GM12878 (cell line): ENCODE measurements at regions of chr2 and their contacts with region 1.

Region 1: GRCh38 chr2:73385595-73386341 is at the start of gene ALMS1:
- DNase-seq: peak; percentile 63
- ATAC-seq: peak; percentile 92
- H3K4me3 ChIP-seq: peak within 1 kb of the TSS; percentile 91
- H3K27ac ChIP-seq: peak within 1 kb of the TSS; percentile 68
- H3K4me1 ChIP-seq: no peaks in the 10 kb centered on the region
- H3K27me3 ChIP-seq: peaks cover 0 to under 1% of the 10 kb centered on the region in 2 experiments; a peak in 1 of 4 replicates
- CTCF ChIP-seq: 0 out of 6 replicates have a peak, but pooled peaks of 1 of the 3 experiments have one; percentile 3
- EP300 ChIP-seq: no peak
- POLR2A ChIP-seq: peak; percentile 76
- RAD21 ChIP-seq: no peak
- polyA plus RNA-seq, gene ALMS1: 1.1 to 2.2 TPM

Region 2: GRCh38 chr2:73233154-73233931 is 152.4 kb before region 1 on chr2 and contains the start of gene PRADC1:
- CTCF ChIA-PET with region 1: no interaction called
- POLR2A ChIA-PET with region 1: no interaction called
- RAD21 ChIA-PET with region 1: no interaction called
- SMC1A ChIA-PET with region 1: no interaction called
- in situ Hi-C with region 1: no loop called
- intact Hi-C with region 1: loop called (anchors 5 kb)
- DNase-seq: peak; percentile 97
- ATAC-seq: peak; percentile 93
- H3K4me3 ChIP-seq: peak within 1 kb of the TSS; percentile 78
- H3K27ac ChIP-seq: peak within 1 kb of the TSS; percentile 91
- H3K4me1 ChIP-seq: peaks cover 4% of the 10 kb centered on the region
- H3K27me3 ChIP-seq: no peaks in the 10 kb centered on the region
- CTCF ChIP-seq: no peak
- EP300 ChIP-seq: no peak
- POLR2A ChIP-seq: peak; percentile 77
- RAD21 ChIP-seq: no peak
- polyA plus RNA-seq, gene PRADC1: 3.7 to 8.1 TPM

Region 3: DNA sequence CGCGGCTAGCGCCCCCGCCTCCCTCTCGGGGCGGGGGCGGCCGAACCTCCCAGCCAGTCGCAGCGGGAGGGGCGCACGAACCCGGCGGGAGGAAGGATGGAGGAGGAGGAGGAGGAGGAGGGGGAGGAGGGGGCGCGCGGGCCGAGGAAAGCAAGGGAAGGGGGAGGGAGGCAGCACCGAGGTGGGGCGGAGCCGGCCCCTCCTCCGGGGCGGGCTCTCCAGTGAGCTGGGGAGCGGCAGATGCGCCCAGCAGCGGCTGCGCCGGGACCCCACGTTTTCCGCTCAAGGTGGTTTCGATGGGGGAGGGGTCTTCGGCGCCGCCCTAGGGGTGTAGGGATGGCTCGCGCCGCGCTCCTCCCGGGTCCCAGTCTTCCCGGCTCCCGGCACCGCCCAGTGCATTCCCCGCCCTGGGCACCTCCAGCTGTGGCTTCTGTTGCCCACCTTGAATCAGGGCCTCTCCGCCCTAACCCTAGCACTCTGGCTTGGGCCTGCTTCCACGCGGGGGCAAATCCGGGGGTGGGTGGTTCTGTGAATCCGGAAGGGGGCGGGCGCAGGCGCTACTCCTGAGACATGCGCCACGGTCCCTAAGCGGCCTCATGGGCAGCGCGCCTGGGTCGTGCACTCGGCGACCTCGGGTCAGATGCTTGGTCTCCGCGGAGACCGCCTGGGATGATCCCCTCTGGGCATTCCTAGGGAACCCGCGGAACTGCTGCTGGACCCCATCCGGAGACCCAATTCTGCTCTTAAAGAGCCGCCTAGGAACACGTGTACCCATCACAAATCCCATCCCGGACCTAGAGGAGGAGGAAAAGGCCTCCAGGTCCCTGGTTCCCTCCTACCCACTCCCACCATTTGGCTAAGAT is 101.2 kb before region 1 on chr2 and contains the start of gene FBXO41:
- CTCF ChIA-PET with region 1: interaction called, 4 read pairs
- POLR2A ChIA-PET with region 1: no interaction called
- RAD21 ChIA-PET with region 1: no interaction called
- SMC1A ChIA-PET with region 1: no interaction called
- in situ Hi-C with region 1: no loop called
- intact Hi-C with region 1: loop called (anchors 2 kb)
- DNase-seq: peak; percentile 47
- ATAC-seq: peak; percentile 88
- H3K4me3 ChIP-seq: peak within 1 kb of the TSS; percentile 99
- H3K27ac ChIP-seq: peak within 1 kb of the TSS; percentile 80
- H3K4me1 ChIP-seq: peaks cover 11% of the 10 kb centered on the region
- H3K27me3 ChIP-seq: no peaks in the 10 kb centered on the region
- CTCF ChIP-seq: peak in 1 of 3 experiments; percentile 12; a peak in 1 of 6 replicates
- EP300 ChIP-seq: no peak
- POLR2A ChIP-seq: peak; percentile 79
- RAD21 ChIP-seq: no peak
- polyA plus RNA-seq, gene FBXO41: 1.9 to 2.0 TPM

Region 4: DNA sequence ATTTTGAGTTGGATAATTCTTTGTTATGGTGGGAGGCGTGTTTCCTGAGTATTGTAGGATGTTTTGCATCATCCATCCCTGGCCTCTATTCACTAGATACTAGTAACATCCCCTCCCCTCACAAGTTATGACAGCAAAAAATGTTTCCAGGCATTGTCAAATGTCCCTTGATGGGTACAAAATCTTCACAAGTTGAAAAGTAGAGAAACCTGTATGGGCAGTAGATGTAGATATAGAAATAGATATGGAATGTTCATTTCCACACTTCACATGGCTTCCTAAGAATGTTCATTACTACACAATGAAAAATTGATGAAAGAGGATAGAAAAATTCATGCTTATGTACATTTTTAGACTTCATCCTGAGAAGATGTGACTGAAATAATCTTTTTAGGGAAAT is 45.3 kb after region 1 on chr2:
- CTCF ChIA-PET with region 1: no interaction called
- POLR2A ChIA-PET with region 1: no interaction called
- RAD21 ChIA-PET with region 1: no interaction called
- SMC1A ChIA-PET with region 1: no interaction called
- in situ Hi-C with region 1: no loop called
- intact Hi-C with region 1: no loop called
- DNase-seq: no peak
- ATAC-seq: no peak
- H3K4me3 ChIP-seq: no peak overlapping the region
- H3K27ac ChIP-seq: no peak overlapping the region
- H3K4me1 ChIP-seq: no peaks in the 10 kb centered on the region
- H3K27me3 ChIP-seq: no peaks in the 10 kb centered on the region
- CTCF ChIP-seq: no peak
- EP300 ChIP-seq: no peak
- POLR2A ChIP-seq: no peak
- RAD21 ChIP-seq: no peak

Region 5: GRCh38 chr2:73601780-73602179 is 216.0 kb after region 1 on chr2:
- CTCF ChIA-PET with region 1: interaction called, 4 read pairs
- POLR2A ChIA-PET with region 1: no interaction called
- RAD21 ChIA-PET with region 1: no interaction called
- SMC1A ChIA-PET with region 1: no interaction called
- in situ Hi-C with region 1: no loop called
- intact Hi-C with region 1: loop called (anchors 10 kb)
- DNase-seq: no peak
- ATAC-seq: no peak
- H3K4me3 ChIP-seq: no peak overlapping the region
- H3K27ac ChIP-seq: no peak overlapping the region
- H3K4me1 ChIP-seq: peaks cover 5% of the 10 kb centered on the region
- H3K27me3 ChIP-seq: no peaks in the 10 kb centered on the region
- CTCF ChIP-seq: no peak
- EP300 ChIP-seq: no peak
- POLR2A ChIP-seq: no peak
- RAD21 ChIP-seq: no peak